ENCODE measurements at regions of chr4 and their contacts with region 1.

Region 1: DNA sequence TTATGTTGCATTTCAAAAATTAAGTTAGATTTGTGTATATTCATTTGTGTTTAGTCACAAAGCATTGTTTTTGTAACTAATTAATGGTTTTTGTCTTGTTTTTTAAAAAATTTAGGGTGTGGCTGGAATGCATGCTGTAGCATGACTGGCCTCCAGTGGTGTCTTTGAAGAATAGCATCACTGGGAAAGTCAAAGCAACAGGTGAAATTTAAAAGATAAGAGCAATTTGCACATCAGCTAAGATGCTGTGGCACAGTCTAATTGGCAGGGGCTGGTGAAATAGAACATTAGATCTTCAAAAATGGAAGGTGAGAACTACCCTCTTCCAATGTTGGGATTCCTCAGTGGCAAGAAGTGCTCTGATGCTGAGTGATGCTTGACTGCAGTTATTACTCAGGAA is 45.3 kb downstream of the ANK2 start:
- DNase-seq: no peak
- H3K4me3 Mint-ChIP-seq: no peak overlapping the region
- H3K27ac Mint-ChIP-seq: no peak overlapping the region
- H3K4me1 Mint-ChIP-seq: no peaks in the 10 kb centered on the region
- H3K27me3 Mint-ChIP-seq: peaks cover 3% of the 10 kb centered on the region

Region 2: GRCh38 chr4:113112338-113112978 is 17.7 kb after region 1 on chr4:
- CTCF ChIA-PET with region 1: no interaction called
- POLR2A ChIA-PET with region 1: interaction called, 10 read pairs
- DNase-seq: no peak
- H3K4me3 Mint-ChIP-seq: no peak overlapping the region
- H3K27ac Mint-ChIP-seq: no peak overlapping the region
- H3K4me1 Mint-ChIP-seq: no peaks in the 10 kb centered on the region
- H3K27me3 Mint-ChIP-seq: no peaks in the 10 kb centered on the region

Region 3: DNA sequence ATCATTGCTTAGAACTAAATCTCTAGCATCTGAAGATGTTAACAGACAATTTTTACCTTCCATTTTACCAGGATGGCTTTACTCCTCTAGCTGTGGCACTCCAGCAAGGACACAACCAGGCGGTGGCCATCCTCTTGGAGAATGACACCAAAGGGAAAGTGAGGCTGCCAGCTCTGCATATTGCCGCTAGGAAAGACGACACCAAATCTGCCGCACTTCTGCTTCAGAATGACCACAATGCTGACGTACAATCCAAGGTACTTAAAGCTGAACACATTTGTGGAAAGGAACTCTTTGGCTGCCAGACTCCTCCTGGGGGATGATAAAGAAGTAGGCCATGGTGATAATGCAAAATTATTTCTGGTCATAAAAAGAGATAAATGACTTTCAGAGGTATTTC is 142.1 kb after region 1 on chr4:
- CTCF ChIA-PET with region 1: no interaction called
- POLR2A ChIA-PET with region 1: no interaction called
- DNase-seq: no peak
- H3K4me3 Mint-ChIP-seq: no peak overlapping the region
- H3K27ac Mint-ChIP-seq: no peak overlapping the region
- H3K4me1 Mint-ChIP-seq: no peaks in the 10 kb centered on the region
- H3K27me3 Mint-ChIP-seq: peaks cover 2% of the 10 kb centered on the region